ENCODE measurements at regions of chr17 and their contacts with region 1.

Region 1: GRCh38 chr17:51764387-51764972 is 394.0 kb downstream of the CA10 start:
- DNase-seq: peak; percentile 56
- ATAC-seq: peak; percentile 100
- H3K4me3 Mint-ChIP-seq: no peak overlapping the region
- H3K27ac Mint-ChIP-seq: no peak overlapping the region
- H3K4me1 Mint-ChIP-seq: no peaks in the 10 kb centered on the region
- H3K27me3 Mint-ChIP-seq: no peaks in the 10 kb centered on the region
- CTCF ChIP-seq: peak; percentile 74; the same call in 1 of the 2 replicates

Region 2: GRCh38 chr17:51748749-51749539 is 15.5 kb before region 1 on chr17:
- CTCF ChIA-PET with region 1: interaction called, 17 read pairs
- POLR2A ChIA-PET with region 1: no interaction called
- DNase-seq: no peak
- ATAC-seq: no peak
- H3K4me3 Mint-ChIP-seq: no peak overlapping the region
- H3K27ac Mint-ChIP-seq: no peak overlapping the region
- H3K4me1 Mint-ChIP-seq: peaks cover 18% of the 10 kb centered on the region
- H3K27me3 Mint-ChIP-seq: no peaks in the 10 kb centered on the region
- CTCF ChIP-seq: no peak

Region 3: DNA sequence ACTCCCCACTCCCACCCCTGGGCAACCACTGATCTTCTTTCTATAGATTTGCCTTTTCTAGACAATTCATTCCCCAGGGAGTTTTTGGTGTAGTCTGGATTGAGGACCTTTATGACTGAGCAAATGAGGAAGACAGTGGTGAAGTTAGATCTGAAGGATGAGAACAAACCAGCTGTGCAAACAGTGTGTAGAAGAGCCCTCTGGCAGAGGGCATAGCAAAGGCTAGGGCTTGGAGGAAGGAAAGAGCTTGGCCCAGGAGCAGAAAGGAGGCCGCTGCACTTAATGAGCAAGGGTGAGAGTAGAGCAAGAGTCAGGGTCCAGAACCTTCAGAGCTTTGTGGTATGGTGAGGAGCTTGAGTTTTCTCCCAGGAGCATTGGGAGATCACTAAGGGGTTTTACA is 41.3 kb after region 1 on chr17:
- CTCF ChIA-PET with region 1: no interaction called
- POLR2A ChIA-PET with region 1: no interaction called
- DNase-seq: no peak
- ATAC-seq: no peak
- H3K4me3 Mint-ChIP-seq: no peak overlapping the region
- H3K27ac Mint-ChIP-seq: no peak overlapping the region
- H3K4me1 Mint-ChIP-seq: no peaks in the 10 kb centered on the region
- H3K27me3 Mint-ChIP-seq: peaks cover 5% of the 10 kb centered on the region
- CTCF ChIP-seq: no peak

Region 4: DNA sequence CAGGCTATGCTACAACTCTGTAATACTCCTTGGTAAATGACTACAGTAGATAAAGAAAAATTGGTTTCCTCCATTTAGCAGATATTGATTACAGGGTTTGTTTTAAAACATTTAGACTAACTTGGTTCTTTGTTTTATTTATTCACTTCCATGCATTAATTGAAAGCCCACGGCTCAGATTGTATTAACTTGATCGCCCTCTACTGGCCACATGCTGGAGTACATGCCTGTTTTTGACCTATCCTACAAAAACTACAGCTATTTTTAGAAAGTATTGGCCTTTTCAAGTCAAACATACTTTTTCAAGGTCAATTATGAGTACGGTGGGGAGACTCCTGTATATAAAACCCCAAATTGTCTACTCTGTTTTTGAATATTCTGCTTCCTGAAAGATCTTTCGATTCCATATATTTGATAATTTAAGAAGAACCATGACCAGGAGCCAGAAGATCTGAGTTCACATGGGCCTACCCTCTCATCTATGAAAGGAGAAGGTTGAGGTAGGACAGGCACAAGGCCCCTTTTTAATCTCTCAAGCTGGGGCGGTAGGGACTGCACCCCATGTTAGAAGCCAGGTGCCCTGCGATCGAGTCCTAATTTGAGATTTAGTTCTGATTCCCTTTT is 342.3 kb after region 1 on chr17:
- CTCF ChIA-PET with region 1: interaction called, 21 read pairs
- POLR2A ChIA-PET with region 1: no interaction called
- DNase-seq: peak; percentile 42
- ATAC-seq: peak; percentile 41; the same call in 1 of the 2 replicates
- H3K4me3 Mint-ChIP-seq: no peak overlapping the region
- H3K27ac Mint-ChIP-seq: no peak overlapping the region
- H3K4me1 Mint-ChIP-seq: peaks cover 7% of the 10 kb centered on the region
- H3K27me3 Mint-ChIP-seq: peaks cover 7% of the 10 kb centered on the region; the same call in 1 of the 2 replicates
- CTCF ChIP-seq: peak; percentile 58; the same call in 1 of the 2 replicates